Posterior vena cava (tissue), 2 donors: ENCODE measurements at regions of chr17 and their contacts with region 1.

Region 1: GRCh38 chr17:35088881-35089585 is 25.5 kb upstream of the RFFL start:
- DNase-seq: peak; percentile 96

Region 2: GRCh38 chr17:34852614-34853013 is 236.4 kb before region 1 on chr17:
- intact Hi-C with region 1: loop called in 1 of 2 experiments (anchors 5 kb)
- DNase-seq: peak; percentile 38

Region 3: DNA sequence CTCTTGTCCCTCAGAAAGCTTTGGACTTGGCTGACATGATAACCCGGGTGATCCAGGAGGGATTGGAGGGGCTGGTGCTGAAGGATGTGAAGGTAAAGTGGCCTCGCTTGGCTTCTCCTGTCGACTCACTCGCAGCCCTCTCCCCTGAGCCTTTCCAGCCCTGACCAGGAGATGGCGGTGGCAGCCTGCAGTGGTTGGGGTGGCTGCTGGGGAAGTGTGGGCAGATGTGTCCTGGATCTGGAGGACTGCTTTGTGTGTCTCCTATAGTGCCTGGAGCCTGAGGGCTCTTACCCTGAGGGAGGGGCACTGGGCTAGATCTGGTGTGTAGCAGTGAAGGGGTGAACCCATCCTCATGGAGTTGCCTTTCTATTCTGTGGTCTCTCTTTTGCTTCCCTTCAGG is 90.8 kb before region 1 on chr17:
- intact Hi-C with region 1: no loop called
- DNase-seq: peak; percentile 90

Region 4: DNA sequence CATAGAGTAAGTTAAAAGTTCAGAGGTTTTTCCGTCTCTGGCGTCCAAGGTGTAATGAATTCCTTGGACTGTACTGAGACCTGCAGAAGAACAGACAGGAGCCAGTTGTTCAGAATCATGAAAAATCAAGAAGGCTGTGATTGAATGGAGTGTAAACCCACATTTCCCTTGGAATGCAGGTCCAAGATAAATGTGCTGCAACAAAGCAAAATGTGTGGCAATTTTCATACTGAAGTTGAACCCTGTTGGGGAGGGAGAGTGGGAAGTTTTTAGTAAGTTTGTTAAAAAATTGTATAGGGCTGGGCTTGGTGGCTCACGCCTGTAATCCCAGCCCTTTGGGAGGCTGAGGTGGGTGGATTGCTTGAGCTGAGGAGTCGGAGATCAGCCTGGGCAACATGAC is 1477.0 kb after region 1 on chr17:
- intact Hi-C with region 1: loop called in 1 of 2 experiments (anchors 5 kb)
- DNase-seq: no peak